Endothelial cell of umbilical vein (primary cell): ENCODE measurements at regions of chr9 and their contacts with region 1.

Region 1: DNA sequence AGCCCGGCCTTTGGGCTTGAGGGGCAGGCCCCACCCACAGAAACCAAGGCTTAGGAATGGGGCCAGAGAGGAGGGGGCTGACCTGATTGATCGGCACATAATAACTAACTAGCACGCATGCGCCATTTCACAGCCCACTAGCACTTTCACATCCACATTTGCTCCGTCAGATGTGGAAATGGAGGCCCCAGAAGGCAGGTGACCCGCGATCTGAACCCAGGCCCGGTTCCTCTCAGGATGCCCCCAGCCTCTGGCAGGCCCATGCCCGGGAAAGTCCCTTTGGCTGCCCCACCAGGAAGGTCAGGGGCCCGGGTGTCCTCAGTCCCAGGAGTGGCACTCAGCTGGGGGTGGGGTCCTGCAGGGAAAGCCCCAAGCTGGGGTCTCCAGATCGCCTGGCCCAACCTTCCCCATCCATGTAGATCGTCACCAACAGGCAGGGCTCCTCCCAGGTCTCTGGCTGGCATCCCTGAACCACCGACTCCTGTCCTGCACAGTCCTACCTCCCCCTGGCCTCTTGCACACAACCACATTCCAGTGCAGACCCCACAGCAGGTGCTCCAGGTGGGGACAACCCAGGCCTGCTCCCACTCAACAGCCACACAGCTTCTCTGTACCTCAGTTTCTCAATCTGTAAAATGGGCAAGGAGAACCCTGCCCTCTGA is 46.7 kb downstream of the VAV2 start:
- DNase-seq: no peak
- H3K4me3 ChIP-seq: no peak overlapping the region
- H3K27ac ChIP-seq: peak overlapping the region; percentile 76
- H3K4me1 ChIP-seq: peaks cover 32% of the 10 kb centered on the region
- H3K27me3 ChIP-seq: no peaks in the 10 kb centered on the region
- CTCF ChIP-seq: no peak
- POLR2A ChIP-seq: no peak

Region 2: GRCh38 chr9:133787754-133788025 is 157.8 kb before region 1 on chr9:
- CTCF ChIA-PET with region 1: interaction called, 4 read pairs
- POLR2A ChIA-PET with region 1: no interaction called
- dilution Hi-C with region 1: no loop called
- intact Hi-C with region 1: loop called (anchors 1 kb)
- DNase-seq: no peak
- H3K4me3 ChIP-seq: no peak overlapping the region
- H3K27ac ChIP-seq: no peak overlapping the region
- H3K4me1 ChIP-seq: peaks cover 23% of the 10 kb centered on the region
- H3K27me3 ChIP-seq: no peaks in the 10 kb centered on the region
- CTCF ChIP-seq: no peak
- POLR2A ChIP-seq: no peak

Region 3: DNA sequence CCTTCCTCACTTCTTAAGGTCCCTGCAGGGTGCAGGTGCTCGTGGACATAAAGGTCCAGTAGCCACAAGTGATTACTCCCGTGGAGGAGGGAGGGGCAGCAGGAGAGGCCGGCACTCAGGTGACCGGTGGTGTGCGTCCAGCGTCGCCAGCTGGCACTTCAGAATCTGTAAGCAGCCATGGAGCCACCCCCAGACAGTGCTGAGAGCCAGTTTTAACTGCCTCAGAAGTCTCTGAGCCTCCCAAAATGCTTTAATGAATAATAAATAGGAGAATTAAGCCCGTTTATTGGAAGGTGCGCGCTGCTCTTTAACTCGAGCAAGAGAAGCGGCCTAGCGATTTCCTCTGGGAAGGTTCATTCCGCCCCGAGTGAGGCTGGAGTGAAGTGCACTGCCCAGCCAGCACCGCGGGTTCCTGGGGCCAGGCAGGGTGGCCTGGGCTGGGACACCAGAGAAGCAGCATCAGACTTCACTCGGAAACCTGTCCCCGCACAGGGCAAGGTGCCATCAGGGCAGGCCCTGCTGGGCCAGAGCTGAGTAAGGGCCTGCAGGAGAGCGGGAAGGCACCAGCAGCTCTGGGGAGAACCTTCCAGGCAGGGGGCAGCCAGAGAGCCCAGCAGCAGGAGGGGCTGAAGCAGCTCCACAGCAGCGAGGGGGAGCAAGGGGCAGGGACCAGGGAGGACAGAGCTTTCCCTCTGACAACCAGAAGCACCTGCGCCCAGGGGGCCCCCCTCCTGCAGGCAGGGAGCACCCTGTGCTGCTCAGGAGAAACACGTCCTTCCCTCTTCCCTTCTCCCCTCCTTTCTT is 14.6 kb before region 1 on chr9:
- CTCF ChIA-PET with region 1: interaction called, 10 read pairs
- POLR2A ChIA-PET with region 1: interaction called, 3 read pairs
- dilution Hi-C with region 1: no loop called
- intact Hi-C with region 1: loop called (anchors 1 kb)
- DNase-seq: no peak
- H3K4me3 ChIP-seq: no peak overlapping the region
- H3K27ac ChIP-seq: no peak overlapping the region
- H3K4me1 ChIP-seq: peaks cover 24% of the 10 kb centered on the region
- H3K27me3 ChIP-seq: no peaks in the 10 kb centered on the region
- CTCF ChIP-seq: no peak
- POLR2A ChIP-seq: no peak